ENCODE measurements at regions of chr15 and their contacts with region 1.

Region 1: DNA sequence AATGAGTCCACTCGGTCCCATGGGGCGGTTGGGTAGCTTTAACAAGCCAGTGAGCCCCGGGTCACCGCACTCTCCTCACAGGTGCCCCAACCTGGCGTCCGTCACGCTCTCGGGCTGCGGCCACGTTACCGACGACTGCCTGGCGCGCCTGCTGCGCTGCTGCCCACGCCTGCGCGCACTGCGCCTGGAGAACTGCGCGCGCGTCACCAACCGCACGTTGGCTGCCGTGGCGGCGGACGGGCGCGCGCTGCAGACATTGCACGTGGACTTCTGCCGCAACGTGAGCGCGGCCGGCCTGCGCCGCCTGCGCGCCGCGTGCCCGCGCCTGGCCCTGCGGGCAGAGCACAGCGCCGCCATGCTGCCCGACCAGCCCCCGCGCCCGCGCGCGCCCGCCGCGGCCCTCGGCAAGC is 3.4 kb downstream of the FBXL22 start:
- DNase-seq: peak; percentile 70 to 98 (median 86)

Region 2: DNA sequence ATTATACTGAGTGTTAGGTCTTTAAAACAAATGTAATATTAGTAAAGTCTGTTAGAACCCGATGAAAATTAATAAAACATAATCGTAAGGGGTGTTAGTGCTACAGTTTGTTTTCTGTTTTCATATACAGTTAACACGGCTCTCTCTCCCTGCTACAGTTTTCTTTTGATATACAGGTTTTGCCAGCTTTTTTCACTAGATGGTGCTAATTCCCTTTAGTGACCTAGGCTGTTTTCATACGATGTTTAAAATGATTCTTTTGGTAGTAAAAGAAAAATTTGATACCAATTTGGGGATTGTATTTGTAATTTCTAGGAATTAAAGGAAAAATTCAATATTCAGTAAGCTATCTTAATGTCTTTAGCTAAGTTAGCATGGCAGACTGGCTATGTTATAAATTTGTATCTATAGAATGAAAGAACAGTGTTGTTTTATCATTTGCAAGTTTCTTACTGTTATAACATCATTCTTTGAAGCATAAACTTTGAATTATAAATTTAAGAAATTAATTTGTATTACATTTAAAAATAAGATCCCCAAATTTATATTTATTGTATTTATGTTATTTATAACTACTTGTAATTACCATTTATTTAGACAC is 311.7 kb before region 1 on chr15:
- intact Hi-C with region 1: loop called (anchors 10 kb)
- DNase-seq: no peak

Region 3: GRCh38 chr15:63466378-63467192 is 134.0 kb before region 1 on chr15:
- intact Hi-C with region 1: loop called (anchors 5 kb)
- DNase-seq: peak in 2 of 10 donors; percentile 13 to 17

Region 4: GRCh38 chr15:63487076-63487757 is 113.4 kb before region 1 on chr15:
- intact Hi-C with region 1: loop called (anchors 5 kb)
- DNase-seq: peak; percentile 61 to 97 (median 88)

Region 5: DNA sequence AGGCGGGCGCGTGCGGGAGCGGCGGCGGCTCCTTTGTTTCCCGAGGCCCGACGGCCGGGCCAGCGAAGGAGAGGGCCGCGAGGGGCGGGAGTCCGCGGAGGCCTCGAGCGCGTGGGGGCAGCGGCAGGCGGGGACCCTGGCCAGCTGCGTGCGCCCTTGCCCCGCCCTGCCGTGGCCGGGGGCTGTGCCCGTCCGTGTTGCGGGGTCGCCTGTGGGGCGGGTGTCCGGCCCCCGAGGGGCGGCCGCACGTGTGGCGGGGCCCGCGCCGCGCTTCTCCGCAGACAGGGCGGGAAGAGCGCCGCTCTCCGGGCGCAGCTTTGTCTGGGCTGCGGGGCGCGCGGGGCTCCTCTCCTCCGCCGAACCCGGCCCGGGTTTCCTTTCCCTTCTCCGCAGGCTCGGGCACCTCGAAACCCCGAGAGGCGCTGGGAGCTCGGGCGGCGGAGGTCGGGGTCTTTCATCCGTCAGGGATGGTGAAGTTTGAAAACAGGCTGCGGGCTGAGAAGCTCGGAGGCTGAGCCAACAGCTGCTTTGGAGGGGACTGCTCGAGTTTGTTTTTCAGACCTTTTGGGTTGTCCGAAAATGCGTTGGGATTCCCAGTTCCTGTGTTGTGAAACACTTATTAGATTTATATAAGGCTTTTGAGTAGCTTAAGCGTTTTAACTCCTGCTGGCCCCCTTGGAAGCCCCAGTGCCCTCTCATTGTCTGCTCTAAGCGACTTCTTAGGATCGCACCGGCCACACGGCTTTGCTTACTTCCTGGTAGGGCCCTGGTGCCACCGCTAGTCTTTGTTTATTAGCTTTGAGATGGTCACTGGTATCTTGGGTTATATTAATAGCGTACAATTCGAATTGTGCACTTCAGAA is 95.4 kb before region 1 on chr15:
- intact Hi-C with region 1: loop called (anchors 5 kb)
- DNase-seq: peak in 6 of 10 donors; percentile 23 to 88 (median 49)

Region 6: GRCh38 chr15:63522225-63522578 is 78.4 kb before region 1 on chr15:
- intact Hi-C with region 1: no loop called
- DNase-seq: no peak

Region 7: DNA sequence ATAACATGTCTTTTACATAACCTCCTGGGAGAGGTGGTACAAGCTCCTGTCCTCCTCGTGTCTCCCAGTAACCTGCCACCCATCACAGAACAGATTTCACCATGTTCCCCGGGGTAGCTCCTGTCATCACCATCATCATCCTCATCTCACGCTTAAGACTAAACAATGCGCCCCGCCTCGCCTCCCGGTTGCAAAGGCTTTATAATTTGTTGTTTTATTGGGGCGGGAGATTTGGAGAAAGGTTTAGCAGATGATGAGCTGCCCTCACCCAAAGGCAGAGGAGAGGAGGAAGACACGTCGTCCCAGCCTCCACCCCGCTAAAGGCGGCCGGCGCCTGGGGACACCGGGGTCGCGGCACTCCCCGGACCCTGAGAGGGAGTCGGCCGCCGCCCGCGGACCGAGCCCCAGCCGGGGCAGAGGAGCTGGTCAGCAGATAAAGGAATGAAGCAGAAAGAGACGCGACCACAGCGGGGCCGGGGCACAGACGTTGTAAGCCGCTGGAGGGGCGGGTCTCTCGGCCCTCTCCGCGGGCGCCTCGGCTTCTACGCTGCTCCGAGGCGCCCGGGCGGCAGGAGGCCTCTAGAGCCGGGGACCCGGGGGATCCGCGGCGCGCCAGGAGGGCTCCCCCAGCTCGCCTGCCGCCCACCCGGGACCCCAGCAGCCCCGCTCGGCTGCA is 232.5 kb after region 1 on chr15:
- intact Hi-C with region 1: loop called (anchors 10 kb)
- DNase-seq: peak in 8 of 10 donors; percentile 9 to 85 (median 30)

Measured in posterior cingulate gyrus (tissue), 11 donors.